ENCODE measurements at regions of chr18 and their contacts with region 1.

Region 1: DNA sequence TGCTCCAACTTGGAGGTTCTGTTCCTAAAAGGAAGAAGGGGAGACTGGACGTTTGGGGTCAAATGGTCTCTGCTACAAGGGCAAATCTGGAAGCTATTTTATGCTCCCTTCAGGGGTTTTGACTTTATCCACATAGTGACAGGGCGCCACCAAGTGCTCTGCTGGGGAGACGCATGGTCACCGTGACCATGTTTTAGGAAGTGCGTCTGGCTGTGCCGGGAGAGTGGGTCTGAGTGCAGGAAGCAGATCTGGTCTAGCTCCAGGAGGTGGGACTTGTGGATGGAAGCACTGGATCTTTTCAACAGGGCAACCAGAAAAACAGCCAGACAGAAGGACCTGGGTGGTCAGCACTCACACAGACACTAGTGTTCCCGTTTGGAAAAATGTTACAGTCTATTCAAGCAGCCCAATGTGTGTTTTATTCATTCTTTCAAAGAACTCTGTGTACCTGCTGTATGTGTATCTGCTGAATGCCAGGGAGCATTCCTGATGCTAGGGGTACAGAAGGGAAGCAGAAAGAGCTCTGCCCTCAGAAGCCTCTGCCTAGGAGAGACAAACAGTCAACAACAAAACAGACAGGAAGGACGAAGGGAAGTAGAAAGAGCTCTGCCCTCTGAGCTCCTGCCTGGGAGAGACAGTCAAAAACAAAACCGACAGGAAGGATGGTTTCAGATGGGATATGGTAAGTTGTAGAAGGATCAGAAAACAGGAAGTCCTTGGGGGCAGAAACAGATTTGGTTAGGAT is 14.3 kb downstream of the IMPA2 start:
- DNase-seq: peak; percentile 31
- ATAC-seq: peak; percentile 94
- H3K4me3 Mint-ChIP-seq: peak overlapping the region; percentile 17
- H3K27ac Mint-ChIP-seq: no peak overlapping the region
- H3K4me1 Mint-ChIP-seq: peaks cover 9% of the 10 kb centered on the region
- H3K27me3 Mint-ChIP-seq: no peaks in the 10 kb centered on the region
- CTCF ChIP-seq: no peak

Region 2: DNA sequence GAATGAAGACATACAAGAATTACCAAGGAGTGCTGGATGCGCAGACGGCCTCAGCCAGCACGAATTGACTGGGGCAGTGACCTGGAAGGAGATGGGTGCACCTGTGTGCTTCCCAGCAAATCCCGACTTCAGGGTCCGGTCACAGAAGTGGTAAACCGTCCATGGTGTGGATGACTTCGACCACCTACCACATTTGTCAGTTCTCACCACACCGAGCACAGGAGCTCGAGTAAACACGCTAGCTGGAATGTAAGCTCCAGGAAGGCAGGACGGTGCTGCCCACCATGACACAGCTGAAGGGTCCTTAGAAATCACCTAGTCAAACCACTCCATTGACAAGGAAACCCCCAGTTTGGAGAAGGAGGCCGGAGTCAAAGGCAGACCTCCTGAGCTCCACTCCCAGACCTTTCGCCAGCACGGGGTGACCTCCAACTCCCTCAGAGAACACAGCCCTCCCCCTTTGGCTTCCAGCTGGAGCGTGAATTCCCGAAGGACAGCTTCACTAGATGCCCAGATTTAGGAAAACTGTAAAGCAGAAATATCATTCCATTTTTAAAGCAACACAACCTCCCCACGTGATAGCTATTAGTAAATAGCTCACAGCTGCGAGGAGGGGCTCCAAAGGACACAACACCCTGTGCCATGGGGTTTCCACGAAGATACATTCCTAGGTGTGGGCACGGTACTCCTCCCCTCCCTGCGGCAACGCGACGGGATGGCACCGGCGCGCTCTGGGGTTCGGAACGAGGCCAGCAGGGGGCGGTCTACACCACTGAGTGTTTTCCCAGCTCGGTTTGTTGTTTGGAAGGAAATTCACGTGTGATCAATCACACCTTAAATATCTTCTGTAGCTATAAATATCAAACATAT is 340.6 kb before region 1 on chr18:
- CTCF ChIA-PET with region 1: interaction called, 10 read pairs
- POLR2A ChIA-PET with region 1: no interaction called
- intact Hi-C with region 1: no loop called
- DNase-seq: peak; percentile 24
- ATAC-seq: no peak
- H3K4me3 Mint-ChIP-seq: no peak overlapping the region
- H3K27ac Mint-ChIP-seq: no peak overlapping the region
- H3K4me1 Mint-ChIP-seq: peaks cover 6% of the 10 kb centered on the region
- H3K27me3 Mint-ChIP-seq: peaks cover 51% of the 10 kb centered on the region
- CTCF ChIP-seq: no peak

Region 3: DNA sequence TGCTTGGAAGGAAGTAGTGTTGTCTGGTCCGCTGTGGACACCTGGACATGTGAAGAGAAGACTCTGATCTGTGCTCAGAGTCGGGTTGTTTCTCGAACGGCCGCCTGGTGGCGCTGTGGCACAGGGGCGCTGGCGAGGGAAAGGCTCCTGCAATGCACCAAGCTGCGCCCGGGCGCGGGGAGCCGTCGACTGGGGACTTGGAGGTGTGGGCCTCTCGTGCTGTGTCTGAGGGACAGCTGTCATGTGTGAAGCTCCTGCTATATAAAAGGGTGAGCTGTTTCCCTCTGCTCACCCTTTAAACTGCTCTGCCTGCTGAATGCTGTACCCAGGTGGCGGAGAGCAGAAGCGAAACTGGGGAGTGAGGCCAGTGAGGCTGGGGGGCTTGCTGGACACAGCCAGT is 262.6 kb before region 1 on chr18:
- CTCF ChIA-PET with region 1: interaction called, 39 read pairs
- POLR2A ChIA-PET with region 1: no interaction called
- intact Hi-C with region 1: loop called (anchors 1 kb)
- DNase-seq: peak; percentile 53
- ATAC-seq: peak; percentile 54
- H3K4me3 Mint-ChIP-seq: peak overlapping the region; percentile 17
- H3K27ac Mint-ChIP-seq: no peak overlapping the region
- H3K4me1 Mint-ChIP-seq: peaks cover 6% of the 10 kb centered on the region
- H3K27me3 Mint-ChIP-seq: peaks cover 25% of the 10 kb centered on the region
- CTCF ChIP-seq: peak; percentile 30

Region 4: DNA sequence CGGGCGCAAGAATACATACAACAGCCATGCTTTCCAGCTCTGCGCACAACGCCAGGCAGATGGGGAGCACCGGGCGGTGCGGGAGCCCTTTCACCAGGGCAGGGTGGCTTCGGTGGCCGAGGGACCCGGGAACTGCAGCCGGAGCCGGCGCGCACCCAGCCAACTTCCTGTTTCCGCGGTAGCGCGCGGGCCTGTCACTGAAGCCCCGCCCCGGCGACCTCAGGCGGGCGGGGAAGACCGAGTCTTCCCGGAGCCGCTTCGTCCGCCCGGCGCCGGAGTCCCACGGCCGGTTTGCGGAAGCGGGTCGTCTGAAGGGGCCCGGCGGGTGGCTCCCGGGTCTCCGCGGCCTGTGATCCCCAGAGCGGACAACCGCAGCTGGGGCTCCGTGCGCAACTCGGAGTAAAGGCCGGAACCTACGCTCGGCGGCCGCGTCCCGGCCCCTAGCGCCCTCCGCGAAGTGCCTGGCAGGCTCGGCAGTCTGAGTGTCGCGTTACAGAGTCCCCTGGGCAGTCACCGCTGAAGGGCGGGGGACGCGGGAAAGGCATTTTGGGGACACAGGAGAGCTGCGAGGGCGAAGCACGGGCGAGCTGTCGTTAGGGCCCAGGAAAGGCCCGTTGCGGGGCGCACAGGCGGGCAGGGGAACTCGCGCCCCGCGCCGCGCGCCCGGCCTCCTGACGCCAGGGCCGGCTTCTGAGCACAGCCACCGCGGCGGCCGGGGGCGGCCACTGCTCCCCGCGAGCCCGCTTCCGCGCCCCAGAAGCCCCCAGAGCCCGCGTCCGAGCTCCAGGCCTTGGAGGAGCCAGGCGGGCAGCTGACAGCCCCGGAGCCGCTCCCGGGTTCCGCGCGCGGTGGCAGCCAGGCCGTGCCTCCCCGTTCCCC is 87.2 kb before region 1 on chr18 and contains the start of gene MPPE1:
- CTCF ChIA-PET with region 1: no interaction called
- POLR2A ChIA-PET with region 1: no interaction called
- intact Hi-C with region 1: no loop called
- DNase-seq: peak; percentile 87
- ATAC-seq: peak; percentile 91
- H3K4me3 Mint-ChIP-seq: peak within 1 kb of the TSS; percentile 94
- H3K27ac Mint-ChIP-seq: peak within 1 kb of the TSS; percentile 94
- H3K4me1 Mint-ChIP-seq: peaks cover 25% of the 10 kb centered on the region
- H3K27me3 Mint-ChIP-seq: no peaks in the 10 kb centered on the region
- CTCF ChIP-seq: no peak
- total RNA-seq, gene MPPE1: 39.0 and 52.9 TPM in 2 replicates

Region 5: DNA sequence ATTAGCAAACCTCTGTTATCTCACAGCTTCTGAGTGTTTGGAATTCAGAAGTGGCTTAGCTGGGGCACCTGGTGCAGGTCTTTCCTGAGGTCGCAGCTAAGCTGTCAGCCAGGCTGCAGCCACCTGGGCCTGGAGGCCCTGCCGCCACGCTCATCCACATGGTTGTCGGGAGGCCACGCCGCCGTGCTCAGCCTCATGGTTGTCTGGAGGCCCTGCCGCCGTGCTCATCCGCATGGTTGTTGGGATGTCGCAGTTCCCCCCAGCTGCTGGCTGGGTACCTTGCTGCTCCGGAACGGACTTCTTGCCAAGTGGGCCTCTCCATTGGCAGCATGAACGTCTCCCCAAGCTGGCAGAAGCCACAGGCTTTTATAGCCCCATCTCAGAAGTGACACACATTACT is 63.2 kb before region 1 on chr18:
- CTCF ChIA-PET with region 1: interaction called, 236 read pairs
- POLR2A ChIA-PET with region 1: no interaction called
- intact Hi-C with region 1: no loop called
- DNase-seq: no peak
- ATAC-seq: no peak
- H3K4me3 Mint-ChIP-seq: no peak overlapping the region
- H3K27ac Mint-ChIP-seq: no peak overlapping the region
- H3K4me1 Mint-ChIP-seq: no peaks in the 10 kb centered on the region
- H3K27me3 Mint-ChIP-seq: peaks cover 3% of the 10 kb centered on the region
- CTCF ChIP-seq: no peak

Region 6: GRCh38 chr18:11937874-11938478 is 57.6 kb before region 1 on chr18:
- CTCF ChIA-PET with region 1: interaction called, 236 read pairs
- POLR2A ChIA-PET with region 1: interaction called, 5 read pairs
- intact Hi-C with region 1: loop called (anchors 1 kb)
- DNase-seq: peak; percentile 47
- ATAC-seq: peak; percentile 62
- H3K4me3 Mint-ChIP-seq: no peak overlapping the region
- H3K27ac Mint-ChIP-seq: no peak overlapping the region
- H3K4me1 Mint-ChIP-seq: no peaks in the 10 kb centered on the region
- H3K27me3 Mint-ChIP-seq: no peaks in the 10 kb centered on the region
- CTCF ChIP-seq: peak; percentile 34

Region 7: GRCh38 chr18:12005538-12006487 is 10.2 kb after region 1 on chr18:
- CTCF ChIA-PET with region 1: interaction called, 11 read pairs
- POLR2A ChIA-PET with region 1: no interaction called
- intact Hi-C with region 1: no loop called
- DNase-seq: no peak
- ATAC-seq: no peak
- H3K4me3 Mint-ChIP-seq: no peak overlapping the region
- H3K27ac Mint-ChIP-seq: no peak overlapping the region
- H3K4me1 Mint-ChIP-seq: peaks cover 4% of the 10 kb centered on the region
- H3K27me3 Mint-ChIP-seq: no peaks in the 10 kb centered on the region
- CTCF ChIP-seq: no peak

Region 8: DNA sequence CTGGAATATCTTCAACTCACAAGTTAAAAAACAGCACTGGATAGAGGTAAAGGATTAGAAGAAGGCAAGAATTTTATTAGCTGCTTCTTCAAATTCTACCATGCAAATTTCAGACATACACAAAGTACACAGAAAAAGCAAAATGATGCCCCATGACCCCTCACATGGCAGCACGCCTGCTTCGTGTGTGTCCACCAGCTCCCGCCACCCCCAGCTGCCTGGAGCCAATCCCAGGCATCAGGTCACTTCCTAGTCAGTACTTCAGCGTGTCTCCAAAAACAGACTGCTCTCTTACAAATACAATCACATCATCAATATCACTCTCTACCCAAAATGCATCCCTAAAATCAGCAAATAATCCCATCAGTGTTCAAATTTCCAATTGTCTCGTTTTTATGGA is 21.5 kb after region 1 on chr18:
- CTCF ChIA-PET with region 1: no interaction called
- POLR2A ChIA-PET with region 1: no interaction called
- intact Hi-C with region 1: no loop called
- DNase-seq: no peak
- ATAC-seq: no peak
- H3K4me3 Mint-ChIP-seq: no peak overlapping the region
- H3K27ac Mint-ChIP-seq: no peak overlapping the region
- H3K4me1 Mint-ChIP-seq: peaks cover 4% of the 10 kb centered on the region
- H3K27me3 Mint-ChIP-seq: no peaks in the 10 kb centered on the region
- CTCF ChIP-seq: no peak

Region 9: DNA sequence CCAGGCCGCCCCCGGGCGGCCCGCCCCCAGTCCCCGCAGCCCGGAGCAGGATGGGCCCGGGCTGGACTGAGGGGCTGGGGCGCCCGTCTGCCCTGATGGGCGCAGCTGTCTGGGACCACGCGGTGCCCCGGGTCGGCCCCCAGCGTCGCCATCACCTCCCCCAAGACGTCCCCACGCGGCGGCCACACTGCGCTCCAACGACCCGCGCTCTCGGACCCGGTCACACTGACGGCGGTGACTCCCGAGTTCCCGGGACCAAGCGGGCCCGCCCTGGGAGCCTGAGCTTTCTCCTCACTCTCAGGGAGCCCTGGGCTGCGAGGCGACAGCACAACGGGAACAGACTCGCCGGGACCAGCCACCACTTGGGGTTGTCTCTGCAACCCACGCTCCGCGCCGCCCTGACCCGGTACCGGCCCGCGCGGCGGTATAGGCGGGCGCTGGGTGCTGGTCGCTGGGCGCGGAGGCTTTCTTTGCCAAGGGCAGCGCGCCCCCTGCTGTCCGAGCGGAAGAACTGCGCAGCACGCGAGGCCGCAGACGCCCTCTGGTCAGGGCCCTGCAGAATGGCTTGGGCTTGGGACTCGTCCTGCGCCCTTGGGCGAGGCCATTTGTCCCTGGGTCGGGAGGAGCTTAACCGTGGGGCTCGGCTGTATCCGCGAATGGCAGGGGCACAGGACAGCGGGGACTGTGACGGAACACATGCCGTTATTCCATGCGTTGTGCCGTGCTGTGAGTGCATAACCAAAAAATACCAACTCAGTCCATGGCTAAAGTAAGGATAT is 43.2 kb after region 1 on chr18:
- CTCF ChIA-PET with region 1: interaction called, 8 read pairs
- POLR2A ChIA-PET with region 1: no interaction called
- intact Hi-C with region 1: loop called (anchors 1 kb)
- DNase-seq: peak; percentile 76
- ATAC-seq: peak; percentile 98
- H3K4me3 Mint-ChIP-seq: peak overlapping the region; percentile 76
- H3K27ac Mint-ChIP-seq: no peak overlapping the region
- H3K4me1 Mint-ChIP-seq: peaks cover 12% of the 10 kb centered on the region
- H3K27me3 Mint-ChIP-seq: peaks cover 7% of the 10 kb centered on the region
- CTCF ChIP-seq: peak; percentile 83

Measured in activated B cell treated with CpG ODN at 0.5 μM for 24 hours (primary cell).